PC-9 (cell line): ENCODE measurements at regions of chr17 and their contacts with region 1.

Region 1: GRCh38 chr17:570388-570787 is 144.3 kb downstream of the VPS53 start:
- DNase-seq: no peak
- H3K4me3 ChIP-seq: no peak overlapping the region
- H3K27ac ChIP-seq: no peak overlapping the region
- H3K4me1 ChIP-seq: no peaks in the 10 kb centered on the region
- H3K27me3 ChIP-seq: no peaks in the 10 kb centered on the region
- CTCF ChIP-seq: no peak

Region 2: GRCh38 chr17:661509-661908 is 91.1 kb after region 1 on chr17:
- CTCF ChIA-PET with region 1: no interaction called
- POLR2A ChIA-PET with region 1: no interaction called
- intact Hi-C with region 1: no loop called
- DNase-seq: no peak
- H3K4me3 ChIP-seq: no peak overlapping the region
- H3K27ac ChIP-seq: no peak overlapping the region
- H3K4me1 ChIP-seq: no peaks in the 10 kb centered on the region
- H3K27me3 ChIP-seq: no peaks in the 10 kb centered on the region
- CTCF ChIP-seq: no peak

Region 3: GRCh38 chr17:693791-694638 is 123.6 kb after region 1 on chr17:
- CTCF ChIA-PET with region 1: interaction called, 3 read pairs
- POLR2A ChIA-PET with region 1: interaction called, 24 read pairs
- intact Hi-C with region 1: no loop called
- DNase-seq: peak; percentile 80 to 98
- H3K4me3 ChIP-seq: peak overlapping the region; percentile 31
- H3K27ac ChIP-seq: peak overlapping the region; percentile 84
- H3K4me1 ChIP-seq: peaks cover 52% of the 10 kb centered on the region
- H3K27me3 ChIP-seq: no peaks in the 10 kb centered on the region
- CTCF ChIP-seq: no peak